Heart left ventricle (tissue), 16 donors: ENCODE measurements at regions of chr3 and their contacts with region 1.

Region 1: GRCh38 chr3:100708967-100709841 is at the start of gene TFG:
- DNase-seq: peak; percentile 97 to 99 (median 98)
- ATAC-seq: peak; percentile 97 to 99 (median 98)
- H3K4me3 ChIP-seq: peak within 1 kb of the TSS; percentile 73 to 97 (median 83)
- H3K27ac ChIP-seq: peak within 1 kb of the TSS; percentile 91 to 99 (median 94)
- H3K4me1 ChIP-seq: peaks cover 0 to 41% (median 31%) of the 10 kb centered on the region in 12 donors
- H3K27me3 ChIP-seq: peaks cover 0 to 13% (median 0%) of the 10 kb centered on the region in 9 donors
- CTCF ChIP-seq: no peak
- POLR2A ChIP-seq: peak in 1 of 2 donors; percentile 73
- total RNA-seq, gene TFG: 68.2 to 103 (median 90.5) TPM

Region 2: GRCh38 chr3:99817437-99818240 is 891.6 kb before region 1 on chr3 and contains the start of gene CMSS1:
- intact Hi-C with region 1: loop called in 1 of 10 experiments (anchors 5 kb)
- DNase-seq: peak; percentile 94 to 98 (median 96)
- ATAC-seq: peak; percentile 97 to 99 (median 98)
- H3K4me3 ChIP-seq: peak within 1 kb of the TSS; percentile 40 to 94 (median 80)
- H3K27ac ChIP-seq: peak within 1 kb of the TSS; percentile 79 to 93 (median 88)
- H3K4me1 ChIP-seq: peaks cover 0 to 24% (median 12%) of the 10 kb centered on the region in 12 donors
- H3K27me3 ChIP-seq: no peaks in the 10 kb centered on the region
- CTCF ChIP-seq: peak in 2 of 12 donors; percentile 30 to 36
- POLR2A ChIP-seq: peak in 1 of 2 donors; percentile 36
- total RNA-seq, gene CMSS1: 13.5 to 48.4 (median 34.8) TPM

Region 3: DNA sequence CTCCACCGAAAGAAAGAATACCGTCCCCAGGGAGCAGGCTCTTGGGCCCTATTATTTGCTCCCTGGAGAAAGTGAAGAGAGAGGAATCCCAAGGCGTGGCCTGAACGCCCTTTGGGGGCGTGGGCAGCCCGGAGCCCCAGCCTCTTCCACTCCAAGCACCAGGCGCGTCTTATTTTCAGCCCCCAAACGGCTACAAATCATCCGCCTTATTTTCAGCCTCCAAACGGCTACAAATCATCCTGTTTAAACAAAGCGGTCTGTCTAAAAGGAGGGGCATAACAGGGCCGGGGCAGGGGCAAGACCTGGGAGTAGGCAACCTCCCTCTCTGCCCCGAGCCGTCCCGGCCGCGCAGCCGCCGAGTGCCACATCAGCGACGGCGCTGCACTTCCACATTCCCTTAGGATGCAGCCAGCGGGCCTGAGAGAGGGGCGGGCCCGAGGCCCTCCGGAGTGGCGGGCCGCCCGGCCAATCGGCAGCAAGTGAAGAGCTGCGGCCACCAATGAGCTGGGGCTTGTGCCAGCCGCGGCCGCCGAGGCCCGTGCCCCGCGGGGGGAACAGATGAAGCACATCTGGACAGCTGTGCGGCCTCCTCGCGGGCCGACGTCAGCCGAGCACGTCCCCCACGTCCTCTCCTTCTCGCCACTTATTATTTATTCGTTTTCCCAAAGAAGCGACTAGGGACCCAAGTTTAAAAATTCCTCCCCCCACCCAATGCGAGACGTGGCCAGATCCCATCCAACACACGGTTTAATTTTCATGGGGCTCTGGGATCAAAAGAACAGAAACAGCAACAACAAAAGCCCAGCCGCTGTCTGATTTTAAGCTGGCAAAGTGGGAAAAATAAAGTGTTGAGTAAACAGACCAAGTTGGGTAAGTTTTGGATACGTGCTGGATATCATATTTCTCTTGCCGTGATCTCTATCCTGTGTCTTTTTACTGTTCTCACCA is 216.9 kb before region 1 on chr3 and contains the start of gene TMEM45A:
- intact Hi-C with region 1: loop called in 2 of 10 experiments (anchors 10 kb)
- DNase-seq: peak; percentile 94 to 98 (median 95)
- ATAC-seq: peak; percentile 100
- H3K4me3 ChIP-seq: peak within 1 kb of the TSS; percentile 27 to 70 (median 61)
- H3K27ac ChIP-seq: peak within 1 kb of the TSS in 11 of 12 donors; percentile 16 to 81 (median 64)
- H3K4me1 ChIP-seq: peaks cover 0 to 16% (median 0%) of the 10 kb centered on the region in 12 donors
- H3K27me3 ChIP-seq: no peaks in the 10 kb centered on the region
- CTCF ChIP-seq: no peak
- POLR2A ChIP-seq: peak in 1 of 2 donors; percentile 73
- total RNA-seq, gene TMEM45A: 1.8 to 6.6 (median 3.1) TPM

Region 4: GRCh38 chr3:100641471-100642032 is 67.7 kb before region 1 on chr3:
- intact Hi-C with region 1: no loop called
- DNase-seq: no peak
- ATAC-seq: no peak
- H3K4me3 ChIP-seq: no peak overlapping the region
- H3K27ac ChIP-seq: no peak overlapping the region
- H3K4me1 ChIP-seq: no peaks in the 10 kb centered on the region
- H3K27me3 ChIP-seq: no peaks in the 10 kb centered on the region
- CTCF ChIP-seq: no peak
- POLR2A ChIP-seq: no peak

Region 5: DNA sequence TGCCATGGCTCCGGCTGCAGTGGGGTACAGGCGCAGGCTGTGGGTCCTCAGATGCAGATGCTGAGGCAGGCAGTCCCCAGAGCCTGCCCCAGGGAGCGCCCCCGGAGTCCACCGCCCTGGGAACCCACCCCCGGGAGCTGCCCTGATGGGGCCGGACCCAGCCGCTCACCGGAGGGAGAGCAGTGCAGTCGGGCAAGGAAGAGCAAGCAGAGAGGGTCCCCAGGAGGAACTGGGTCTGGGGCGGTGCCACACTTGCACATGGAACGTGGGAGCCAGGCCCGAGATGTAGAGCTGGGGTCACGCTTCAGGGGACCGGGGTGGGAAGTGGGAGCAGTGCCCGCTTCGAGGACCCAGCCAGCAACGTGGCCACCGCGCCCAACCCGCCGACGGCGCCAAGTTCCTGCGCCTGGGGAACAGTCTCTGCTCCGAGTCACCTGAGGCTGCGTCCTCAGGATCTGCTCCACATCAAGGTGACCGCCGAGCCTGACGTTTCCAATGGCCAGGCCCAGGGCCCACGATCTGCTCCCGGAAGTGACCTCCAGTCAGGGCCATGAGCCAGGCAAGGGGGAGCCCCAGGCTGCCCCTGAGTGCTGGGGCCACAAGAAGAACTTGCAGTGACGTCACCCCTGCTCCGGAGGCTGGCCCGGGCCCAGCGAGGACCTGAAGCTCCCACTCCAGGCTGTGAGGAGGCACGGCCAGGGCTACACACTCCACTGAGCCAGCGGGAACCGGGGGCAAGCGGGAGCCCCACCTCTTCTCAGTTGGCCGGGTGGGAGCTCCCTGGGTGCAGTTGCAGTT is 26.9 kb before region 1 on chr3:
- intact Hi-C with region 1: no loop called
- DNase-seq: peak in 4 of 5 donors; percentile 12 to 63 (median 30)
- ATAC-seq: peak in 3 of 4 donors; percentile 79 to 88 (median 80)
- H3K4me3 ChIP-seq: peak overlapping the region in 8 of 12 donors; percentile 4 to 49 (median 32)
- H3K27ac ChIP-seq: no peak overlapping the region
- H3K4me1 ChIP-seq: no peaks in the 10 kb centered on the region
- H3K27me3 ChIP-seq: no peaks in the 10 kb centered on the region
- CTCF ChIP-seq: no peak
- POLR2A ChIP-seq: no peak

Region 6: GRCh38 chr3:100825574-100825973 is 116.4 kb after region 1 on chr3:
- intact Hi-C with region 1: no loop called
- DNase-seq: no peak
- ATAC-seq: no peak
- H3K4me3 ChIP-seq: no peak overlapping the region
- H3K27ac ChIP-seq: no peak overlapping the region
- H3K4me1 ChIP-seq: no peaks in the 10 kb centered on the region
- H3K27me3 ChIP-seq: no peaks in the 10 kb centered on the region
- CTCF ChIP-seq: no peak
- POLR2A ChIP-seq: no peak

Region 7: DNA sequence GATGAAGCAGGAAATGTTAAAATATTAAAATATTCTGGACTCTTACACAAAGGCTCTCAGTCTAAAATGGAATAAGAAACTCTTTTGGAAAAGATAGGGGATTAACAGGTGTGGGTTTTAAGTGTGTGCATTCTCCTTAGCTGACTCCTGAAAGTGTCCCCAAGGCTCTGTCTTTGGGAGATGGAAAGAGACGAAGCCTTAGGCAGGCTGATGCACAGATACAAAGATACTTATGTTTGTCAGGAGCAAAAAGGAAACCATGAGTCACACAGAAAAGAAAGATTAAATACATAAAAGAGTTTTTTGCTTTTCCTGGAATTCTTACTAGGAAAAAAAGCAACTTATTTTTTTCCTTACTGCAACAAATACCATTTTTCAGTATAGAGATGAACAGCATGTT is 307.8 kb after region 1 on chr3:
- intact Hi-C with region 1: no loop called
- DNase-seq: no peak
- ATAC-seq: peak in 2 of 4 donors; percentile 45 to 50
- H3K4me3 ChIP-seq: peak overlapping the region in 1 of 12 donors; percentile 12
- H3K27ac ChIP-seq: peak overlapping the region in 7 of 12 donors; percentile 4 to 69 (median 37)
- H3K4me1 ChIP-seq: peaks cover 0 to 5% (median 0%) of the 10 kb centered on the region in 12 donors
- H3K27me3 ChIP-seq: no peaks in the 10 kb centered on the region
- CTCF ChIP-seq: no peak
- POLR2A ChIP-seq: no peak